Caco-2 (cell line): ENCODE measurements at regions of chr6 and their contacts with region 1.

Region 1: GRCh38 chr6:129544881-129545612 is 164.9 kb downstream of the ARHGAP18 start:
- DNase-seq: peak in 1 of 2 experiments; percentile 21
- H3K4me3 ChIP-seq: no peak overlapping the region
- H3K4me3 Mint-ChIP-seq: no peak overlapping the region
- H3K27ac Mint-ChIP-seq: peak overlapping the region; percentile 66
- H3K4me1 ChIP-seq: peaks cover 20% of the 10 kb centered on the region
- H3K4me1 Mint-ChIP-seq: peaks cover 7% of the 10 kb centered on the region
- H3K27me3 ChIP-seq: no peaks in the 10 kb centered on the region
- H3K27me3 Mint-ChIP-seq: no peaks in the 10 kb centered on the region
- CTCF ChIP-seq: no peak

Region 2: DNA sequence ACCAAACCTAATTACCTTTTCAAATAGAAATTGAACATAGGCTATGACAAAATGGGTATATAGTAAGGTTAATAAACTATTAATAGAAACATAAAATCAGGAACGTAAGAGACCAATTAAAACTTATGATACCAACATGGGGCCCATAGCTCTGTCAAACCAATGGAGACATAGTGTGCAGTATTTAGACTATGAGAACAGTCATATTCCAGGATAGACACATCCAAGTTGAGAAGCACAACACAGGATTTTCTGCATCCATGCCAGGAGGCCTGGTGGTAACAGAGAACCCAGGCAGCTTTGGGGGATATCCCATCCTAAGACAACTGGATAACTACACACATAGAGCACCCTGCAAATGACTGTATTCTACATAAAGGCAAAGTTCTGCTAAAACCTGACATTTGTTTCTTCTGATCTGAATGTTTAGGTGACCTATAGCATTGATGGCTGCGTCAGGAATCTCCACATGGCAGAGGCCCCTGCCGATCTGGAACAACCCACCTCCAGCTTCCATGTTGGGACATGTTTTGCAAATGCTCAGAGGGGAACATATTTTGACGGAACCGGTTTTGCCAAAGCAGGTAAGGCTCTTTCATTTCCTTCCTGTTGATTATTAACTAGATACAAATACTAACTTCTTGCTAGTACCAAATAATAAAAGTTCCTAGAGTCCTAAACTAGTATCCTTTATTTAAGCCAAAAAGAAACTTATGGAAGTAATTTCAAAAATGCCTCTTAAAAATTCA is 37.8 kb before region 1 on chr6:
- CTCF ChIA-PET with region 1: no interaction called
- POLR2A ChIA-PET with region 1: no interaction called
- intact Hi-C with region 1: loop called (anchors 1 kb)
- DNase-seq: peak; percentile 51 to 58
- H3K4me3 ChIP-seq: no peak overlapping the region
- H3K4me3 Mint-ChIP-seq: peak overlapping the region; percentile 47
- H3K27ac Mint-ChIP-seq: peak overlapping the region; percentile 21
- H3K4me1 ChIP-seq: peaks cover 18% of the 10 kb centered on the region
- H3K4me1 Mint-ChIP-seq: peaks cover 24% of the 10 kb centered on the region
- H3K27me3 ChIP-seq: no peaks in the 10 kb centered on the region
- H3K27me3 Mint-ChIP-seq: no peaks in the 10 kb centered on the region
- CTCF ChIP-seq: no peak

Region 3: GRCh38 chr6:129567374-129567773 is 22.3 kb after region 1 on chr6:
- CTCF ChIA-PET with region 1: no interaction called
- POLR2A ChIA-PET with region 1: no interaction called
- intact Hi-C with region 1: loop called (anchors 1 kb)
- DNase-seq: peak in 1 of 2 experiments; percentile 21
- H3K4me3 ChIP-seq: no peak overlapping the region
- H3K4me3 Mint-ChIP-seq: no peak overlapping the region
- H3K27ac Mint-ChIP-seq: no peak overlapping the region
- H3K4me1 ChIP-seq: peaks cover 31% of the 10 kb centered on the region
- H3K4me1 Mint-ChIP-seq: peaks cover 27% of the 10 kb centered on the region
- H3K27me3 ChIP-seq: no peaks in the 10 kb centered on the region
- H3K27me3 Mint-ChIP-seq: no peaks in the 10 kb centered on the region
- CTCF ChIP-seq: peak in 1 of 2 experiments; percentile 32